ENCODE measurements at regions of chr7 and their contacts with region 1.

Region 1: GRCh38 chr7:69968969-69969556 is 370.8 kb downstream of the AUTS2 start:
- DNase-seq: no peak
- ATAC-seq: peak; percentile 53
- H3K4me3 ChIP-seq: no peak overlapping the region
- H3K27ac ChIP-seq: no peak overlapping the region
- H3K4me1 ChIP-seq: peaks cover 7% of the 10 kb centered on the region; the same call in 1 of the 2 replicates
- H3K27me3 ChIP-seq: no peaks in the 10 kb centered on the region
- CTCF ChIP-seq: no peak
- EP300 ChIP-seq: no peak
- POLR2A ChIP-seq: no peak
- RAD21 ChIP-seq: no peak

Region 2: DNA sequence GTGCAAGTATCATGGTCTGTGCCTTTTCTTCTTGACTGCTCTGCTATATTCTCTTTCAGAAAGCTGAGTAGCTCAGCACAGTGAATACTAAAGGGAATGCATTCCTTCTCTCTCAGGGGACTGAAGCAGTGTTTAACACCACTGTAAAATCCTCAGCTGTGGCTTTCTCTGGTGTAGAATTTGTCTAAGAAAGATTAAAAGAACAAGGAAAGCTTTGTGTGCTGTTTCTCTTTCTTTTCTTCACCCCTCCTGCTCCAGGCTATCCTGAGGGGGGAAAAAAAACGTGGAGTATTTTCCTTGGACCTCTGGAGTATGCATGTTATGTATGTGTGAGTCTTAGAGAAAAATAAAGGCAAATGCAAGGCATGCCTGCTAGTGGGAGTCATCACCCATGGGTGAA is 13.1 kb after region 1 on chr7:
- CTCF ChIA-PET with region 1: no interaction called
- POLR2A ChIA-PET with region 1: no interaction called
- RAD21 ChIA-PET with region 1: no interaction called
- SMC1A ChIA-PET with region 1: interaction called, 10 read pairs
- in situ Hi-C with region 1: no loop called
- intact Hi-C with region 1: no loop called
- DNase-seq: no peak
- ATAC-seq: no peak
- H3K4me3 ChIP-seq: no peak overlapping the region
- H3K27ac ChIP-seq: no peak overlapping the region
- H3K4me1 ChIP-seq: no peaks in the 10 kb centered on the region
- H3K27me3 ChIP-seq: no peaks in the 10 kb centered on the region
- CTCF ChIP-seq: no peak
- EP300 ChIP-seq: no peak
- POLR2A ChIP-seq: no peak
- RAD21 ChIP-seq: no peak